HAP-1 (cell line): ENCODE measurements at regions of chr12 and their contacts with region 1.

Region 1: GRCh38 chr12:40622246-40622838 is 69.9 kb upstream of the CNTN1 start:
- DNase-seq: peak; percentile 12 to 71
- H3K4me3 ChIP-seq: no peak overlapping the region
- H3K4me1 ChIP-seq: no peaks in the 10 kb centered on the region
- H3K27me3 ChIP-seq: no peaks in the 10 kb centered on the region

Region 2: GRCh38 chr12:40874868-40875267 is 252.5 kb after region 1 on chr12:
- in situ Hi-C with region 1: no loop called
- DNase-seq: no peak
- H3K4me3 ChIP-seq: no peak overlapping the region
- H3K4me1 ChIP-seq: no peaks in the 10 kb centered on the region
- H3K27me3 ChIP-seq: no peaks in the 10 kb centered on the region

Region 3: GRCh38 chr12:40921563-40922163 is 299.3 kb after region 1 on chr12:
- in situ Hi-C with region 1: loop called (anchors 5 kb)
- DNase-seq: peak in 1 of 2 experiments; percentile 5
- H3K4me3 ChIP-seq: no peak overlapping the region
- H3K4me1 ChIP-seq: no peaks in the 10 kb centered on the region
- H3K27me3 ChIP-seq: peaks cover 12% of the 10 kb centered on the region; the same call in 1 of the 2 replicates